ENCODE measurements at regions of chr21 and their contacts with region 1.

Region 1: DNA sequence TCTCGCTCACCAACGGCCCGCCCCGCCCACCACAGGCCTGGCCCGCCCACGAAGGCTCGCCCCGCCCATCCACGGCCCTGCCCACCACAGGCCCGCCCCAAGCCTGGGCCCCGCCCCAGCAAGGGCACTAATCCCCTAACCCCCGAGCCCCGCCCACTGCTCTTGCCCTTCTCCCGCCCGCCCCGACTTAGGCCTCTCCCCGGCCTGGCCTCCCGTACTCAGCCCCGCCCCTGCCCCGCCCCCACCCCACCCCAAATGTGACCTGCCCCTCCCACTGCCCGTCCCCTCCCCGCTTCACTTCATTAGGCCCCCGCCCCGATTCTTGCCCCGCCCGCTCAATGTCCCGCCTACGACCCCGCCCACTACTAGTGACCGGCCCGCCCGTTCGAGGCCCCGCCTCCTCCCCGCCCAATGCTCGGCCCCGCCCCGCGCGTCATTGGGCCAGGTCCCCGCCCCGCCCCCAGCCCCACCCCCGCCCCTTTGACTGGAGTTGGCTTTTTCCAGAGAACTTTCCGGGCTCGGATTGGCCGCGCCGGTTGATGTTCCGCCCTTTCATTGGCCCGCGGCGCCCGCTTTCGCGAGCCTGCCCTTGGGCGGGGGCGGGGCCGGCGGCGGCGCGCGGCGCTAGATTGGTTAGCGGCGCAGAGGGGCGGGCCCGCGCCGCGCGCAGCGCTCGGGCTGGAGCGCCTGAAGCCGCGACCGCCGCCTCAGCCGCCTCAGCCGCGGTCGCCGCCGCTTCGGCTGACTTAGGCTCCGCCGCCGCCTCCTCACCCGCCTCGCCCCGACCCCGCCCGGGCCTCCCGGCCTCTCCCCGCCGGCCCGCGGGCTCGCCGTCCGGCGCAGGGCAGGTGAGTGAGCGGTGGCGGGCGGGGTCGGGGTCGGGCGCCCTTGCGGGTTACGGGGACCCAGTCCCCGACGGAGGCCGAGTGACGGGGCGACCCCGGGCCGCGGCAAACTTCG is at the start of gene PCBP3:
- DNase-seq: peak; percentile 86 to 95 (median 88)
- ATAC-seq: peak; percentile 82
- H3K4me3 ChIP-seq: no peak within 1 kb of the TSS
- H3K4me3 Mint-ChIP-seq: peak within 1 kb of the TSS; percentile 77
- H3K27ac ChIP-seq: no peak within 1 kb of the TSS
- H3K27ac Mint-ChIP-seq: peak within 1 kb of the TSS; percentile 37
- H3K4me1 ChIP-seq: peaks cover 21% of the 10 kb centered on the region
- H3K4me1 Mint-ChIP-seq: peaks cover 33% of the 10 kb centered on the region
- H3K27me3 ChIP-seq: peaks cover 15 to 20% of the 10 kb centered on the region in 2 experiments
- H3K27me3 Mint-ChIP-seq: peaks cover 27% of the 10 kb centered on the region
- CTCF ChIP-seq: no peak
- total RNA-seq, gene PCBP3: 1.3 to 2.4 TPM

Region 2: GRCh38 chr21:45542242-45542666 is 101.0 kb before region 1 on chr21 and contains the start of gene SLC19A1:
- CTCF ChIA-PET with region 1: no interaction called
- POLR2A ChIA-PET with region 1: no interaction called
- intact Hi-C with region 1: loop called (anchors 1 to 2 kb)
- DNase-seq: peak; percentile 42 to 87 (median 67)
- ATAC-seq: peak; percentile 86
- H3K4me3 ChIP-seq: peak within 1 kb of the TSS; percentile 45 to 57
- H3K4me3 Mint-ChIP-seq: peak within 1 kb of the TSS; percentile 72
- H3K27ac ChIP-seq: peak within 1 kb of the TSS; percentile 30 to 54
- H3K27ac Mint-ChIP-seq: no peak within 1 kb of the TSS
- H3K4me1 ChIP-seq: peaks cover 17% of the 10 kb centered on the region
- H3K4me1 Mint-ChIP-seq: peaks cover 14% of the 10 kb centered on the region
- H3K27me3 ChIP-seq: no peaks in the 10 kb centered on the region
- H3K27me3 Mint-ChIP-seq: no peaks in the 10 kb centered on the region
- CTCF ChIP-seq: peak; percentile 40
- total RNA-seq, gene SLC19A1: 8.8 to 9.0 TPM

Region 3: DNA sequence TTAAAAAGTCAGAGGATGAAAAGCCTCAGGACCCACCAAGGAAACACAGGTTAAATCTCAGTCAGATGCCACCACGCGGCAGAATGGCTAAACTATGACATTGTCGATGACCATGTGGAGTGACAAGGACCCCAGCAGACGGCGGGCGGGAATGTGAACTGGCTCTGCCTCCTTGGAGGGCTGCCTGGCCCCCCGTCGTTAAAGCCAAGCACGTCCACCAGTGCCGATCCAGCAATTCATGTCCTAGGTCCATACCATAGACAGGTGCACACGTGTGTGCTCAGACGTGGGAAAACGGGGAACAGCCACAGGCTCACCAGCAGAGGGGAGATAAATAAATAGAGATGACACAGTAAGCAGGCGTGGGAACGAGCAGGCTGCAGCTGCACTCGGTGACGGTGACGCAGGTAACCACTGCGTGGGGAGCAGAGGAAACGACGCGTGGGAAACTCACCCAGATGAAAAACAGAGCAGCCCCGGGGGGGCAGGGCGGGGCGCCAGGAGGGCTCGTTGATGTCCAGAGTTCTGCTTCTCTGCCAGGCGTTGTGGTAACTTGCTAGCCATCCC is 28.1 kb before region 1 on chr21:
- CTCF ChIA-PET with region 1: no interaction called
- POLR2A ChIA-PET with region 1: no interaction called
- intact Hi-C with region 1: loop called (anchors 1 to 2 kb)
- DNase-seq: peak; percentile 68 to 97 (median 89)
- ATAC-seq: peak; percentile 89
- H3K4me3 ChIP-seq: peak overlapping the region; percentile 46 to 51
- H3K4me3 Mint-ChIP-seq: peak overlapping the region; percentile 81
- H3K27ac ChIP-seq: peak overlapping the region; percentile 55 to 96
- H3K27ac Mint-ChIP-seq: peak overlapping the region; percentile 98
- H3K4me1 ChIP-seq: peaks cover 26% of the 10 kb centered on the region
- H3K4me1 Mint-ChIP-seq: peaks cover 36% of the 10 kb centered on the region
- H3K27me3 ChIP-seq: peaks cover 0 to 4% of the 10 kb centered on the region in 2 experiments
- H3K27me3 Mint-ChIP-seq: no peaks in the 10 kb centered on the region
- CTCF ChIP-seq: peak; percentile 43

Region 4: GRCh38 chr21:45981151-45982089 is 338.1 kb after region 1 on chr21 and contains the start of gene COL6A1:
- CTCF ChIA-PET with region 1: no interaction called
- POLR2A ChIA-PET with region 1: no interaction called
- intact Hi-C with region 1: loop called in 1 of 2 experiments (anchors 5 kb)
- DNase-seq: peak in 8 of 9 experiments; percentile 38 to 80 (median 70)
- ATAC-seq: peak; percentile 78
- H3K4me3 ChIP-seq: peak within 1 kb of the TSS; percentile 42 to 54
- H3K4me3 Mint-ChIP-seq: peak within 1 kb of the TSS; percentile 61
- H3K27ac ChIP-seq: no peak within 1 kb of the TSS
- H3K27ac Mint-ChIP-seq: no peak within 1 kb of the TSS
- H3K4me1 ChIP-seq: peaks cover 17% of the 10 kb centered on the region
- H3K4me1 Mint-ChIP-seq: peaks cover 6% of the 10 kb centered on the region
- H3K27me3 ChIP-seq: peaks cover 0 to 11% of the 10 kb centered on the region in 2 experiments
- H3K27me3 Mint-ChIP-seq: peaks cover 3% of the 10 kb centered on the region
- CTCF ChIP-seq: no peak
- total RNA-seq, gene COL6A1: 15.2 to 16.5 TPM